ENCODE measurements at regions of chr1 and their contacts with region 1.

Region 1: DNA sequence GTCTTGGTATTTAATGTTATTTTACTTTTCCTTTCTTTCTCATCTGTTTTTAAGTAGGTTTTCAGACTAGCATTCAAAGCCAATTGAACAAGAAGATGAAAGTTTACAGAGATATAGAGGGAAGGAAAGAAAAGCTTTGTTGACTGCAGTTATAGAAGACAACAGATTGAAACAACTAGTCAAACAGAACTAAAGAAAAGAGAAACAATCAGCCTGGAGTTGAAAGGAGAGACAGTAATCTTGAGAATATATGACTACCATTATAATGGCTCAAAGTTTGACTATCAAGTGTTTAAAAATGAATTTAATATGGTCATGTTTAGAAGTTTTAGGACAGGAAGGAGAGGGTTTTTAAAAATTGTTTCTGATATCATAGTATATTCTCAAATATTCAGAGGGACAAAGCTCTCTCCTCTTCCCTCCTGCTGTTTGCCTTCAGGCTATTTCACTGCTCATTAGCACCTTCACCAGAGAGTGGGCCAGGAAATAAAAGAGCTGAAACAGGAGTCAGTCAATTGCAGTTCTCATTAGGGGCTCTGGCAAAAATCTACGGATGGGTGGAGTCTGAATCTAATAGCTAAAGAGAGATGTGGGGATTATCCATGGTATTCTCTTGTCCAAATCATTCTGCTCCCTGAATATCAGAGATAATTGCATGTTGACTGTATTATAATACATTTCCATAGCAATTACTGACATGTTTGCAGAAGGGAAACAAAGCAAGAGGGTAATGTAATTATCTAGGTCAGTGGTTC is 577.8 kb downstream of the BRINP3 start:
- DNase-seq: no peak
- ATAC-seq: no peak
- H3K4me3 ChIP-seq: no peak overlapping the region
- H3K27ac ChIP-seq: no peak overlapping the region
- H3K4me1 ChIP-seq: no peaks in the 10 kb centered on the region
- H3K27me3 ChIP-seq: no peaks in the 10 kb centered on the region
- CTCF ChIP-seq: no peak

Region 2: DNA sequence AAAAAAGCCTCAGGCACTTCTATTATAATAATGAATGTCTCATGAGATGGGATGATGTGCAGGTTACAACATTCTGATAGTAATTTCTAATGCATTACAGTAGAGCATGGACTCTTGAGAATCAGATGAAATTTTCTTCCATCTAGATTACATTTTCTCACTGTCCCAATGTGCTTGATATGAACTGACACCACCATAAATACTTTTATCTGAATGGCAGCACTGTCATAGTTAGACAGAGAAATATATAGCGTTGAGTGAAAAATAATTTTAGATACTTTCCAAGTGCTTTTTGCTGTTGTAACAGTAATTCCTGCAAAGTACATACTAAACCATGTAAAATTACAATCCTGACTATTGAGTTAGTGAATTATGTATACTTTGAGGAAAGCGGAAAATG is 52.2 kb before region 1 on chr1:
- intact Hi-C with region 1: no loop called
- DNase-seq: no peak
- ATAC-seq: no peak
- H3K4me3 ChIP-seq: no peak overlapping the region
- H3K27ac ChIP-seq: no peak overlapping the region
- H3K4me1 ChIP-seq: no peaks in the 10 kb centered on the region
- H3K27me3 ChIP-seq: no peaks in the 10 kb centered on the region
- CTCF ChIP-seq: no peak

Region 3: GRCh38 chr1:189939967-189940366 is 40.1 kb after region 1 on chr1:
- intact Hi-C with region 1: loop called in 1 of 2 experiments (anchors 2 kb)
- DNase-seq: no peak
- ATAC-seq: no peak
- H3K4me3 ChIP-seq: no peak overlapping the region
- H3K27ac ChIP-seq: no peak overlapping the region
- H3K4me1 ChIP-seq: no peaks in the 10 kb centered on the region
- H3K27me3 ChIP-seq: no peaks in the 10 kb centered on the region
- CTCF ChIP-seq: no peak

Region 4: GRCh38 chr1:190001187-190001586 is 101.3 kb after region 1 on chr1:
- intact Hi-C with region 1: no loop called
- DNase-seq: no peak
- ATAC-seq: no peak
- H3K4me3 ChIP-seq: no peak overlapping the region
- H3K27ac ChIP-seq: no peak overlapping the region
- H3K4me1 ChIP-seq: no peaks in the 10 kb centered on the region
- H3K27me3 ChIP-seq: no peaks in the 10 kb centered on the region
- CTCF ChIP-seq: no peak

Region 5: GRCh38 chr1:190119684-190120083 is 219.8 kb after region 1 on chr1:
- intact Hi-C with region 1: no loop called
- DNase-seq: no peak
- ATAC-seq: no peak
- H3K4me3 ChIP-seq: no peak overlapping the region
- H3K27ac ChIP-seq: no peak overlapping the region
- H3K4me1 ChIP-seq: no peaks in the 10 kb centered on the region
- H3K27me3 ChIP-seq: no peaks in the 10 kb centered on the region
- CTCF ChIP-seq: no peak

Measured in psoas muscle (tissue), 8 donors.